Mammary epithelial cell (primary cell): ENCODE measurements at regions of chr4 and their contacts with region 1.

Region 1: DNA sequence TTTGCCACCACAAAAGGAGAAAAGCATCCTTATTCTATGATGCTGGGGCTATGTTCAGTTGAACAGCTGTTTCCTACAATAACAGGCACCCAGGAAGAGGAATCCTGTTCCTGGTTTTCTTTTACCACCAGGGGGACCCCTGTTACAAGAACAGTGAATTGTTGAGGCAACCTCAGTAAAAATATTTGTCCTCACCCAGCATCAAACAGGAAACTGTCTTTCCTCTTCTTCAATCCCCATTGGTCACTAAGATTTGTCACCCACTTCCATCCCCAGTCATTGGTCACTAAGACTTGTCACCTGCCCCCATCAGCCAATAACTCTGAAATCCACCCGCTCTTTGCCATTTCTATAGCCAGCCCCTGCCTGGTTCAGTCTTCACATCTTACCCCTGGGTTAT is 143.5 kb upstream of the GALNT7 start:
- DNase-seq: peak; percentile 58
- H3K4me3 ChIP-seq: no peak overlapping the region
- H3K27ac ChIP-seq: no peak overlapping the region
- H3K4me1 ChIP-seq: no peaks in the 10 kb centered on the region
- H3K27me3 ChIP-seq: no peaks in the 10 kb centered on the region
- CTCF ChIP-seq: peak; percentile 62 to 79

Region 2: DNA sequence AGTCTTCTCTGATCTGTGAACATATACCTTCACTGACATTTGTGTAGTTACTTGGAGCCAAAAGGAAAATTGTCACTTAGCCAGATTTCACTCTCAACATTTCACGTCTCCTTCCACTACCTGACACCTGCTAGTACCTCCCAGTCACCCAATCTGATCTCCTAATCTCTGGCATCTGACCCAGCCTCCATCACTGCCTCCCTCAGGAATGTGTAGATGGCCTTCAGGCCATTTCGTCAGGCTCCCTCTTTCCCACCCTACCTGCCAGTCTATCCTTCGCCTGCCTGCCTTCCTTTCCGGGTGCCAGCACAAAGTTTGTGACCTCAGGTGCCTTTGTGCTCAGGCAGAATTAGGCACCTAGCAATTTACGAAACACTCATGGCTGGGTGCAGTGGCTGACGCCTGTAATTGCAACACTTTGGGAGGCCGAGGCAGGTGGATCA is 184.4 kb after region 1 on chr4:
- CTCF ChIA-PET with region 1: no interaction called
- dilution Hi-C with region 1: no loop called
- in situ Hi-C with region 1: no loop called
- intact Hi-C with region 1: no loop called
- DNase-seq: no peak
- H3K4me3 ChIP-seq: no peak overlapping the region
- H3K27ac ChIP-seq: no peak overlapping the region
- H3K4me1 ChIP-seq: peaks cover 45% of the 10 kb centered on the region
- H3K27me3 ChIP-seq: no peaks in the 10 kb centered on the region
- CTCF ChIP-seq: no peak

Region 3: DNA sequence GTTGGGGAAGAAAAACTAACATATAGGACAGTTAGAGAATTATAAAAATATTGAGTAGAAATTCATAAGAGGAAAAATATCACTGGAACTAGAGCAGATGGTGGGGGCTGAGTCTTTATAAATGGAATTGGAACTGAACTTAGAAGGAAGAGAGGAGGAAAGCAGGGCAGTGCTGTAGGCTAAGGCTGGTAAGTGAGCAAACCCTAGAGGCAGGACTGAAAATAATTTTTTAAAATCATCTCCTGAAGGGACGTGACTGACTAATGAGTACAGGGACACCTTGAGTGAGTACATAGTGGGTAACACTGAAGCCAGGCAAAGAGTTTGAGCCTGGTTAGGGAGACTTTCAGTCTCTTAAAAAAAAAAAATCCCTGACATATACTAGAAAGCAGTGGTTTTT is 206.8 kb after region 1 on chr4:
- CTCF ChIA-PET with region 1: no interaction called
- dilution Hi-C with region 1: no loop called
- in situ Hi-C with region 1: no loop called
- intact Hi-C with region 1: loop called (anchors 1 kb)
- DNase-seq: peak; percentile 32
- H3K4me3 ChIP-seq: no peak overlapping the region
- H3K27ac ChIP-seq: no peak overlapping the region
- H3K4me1 ChIP-seq: no peaks in the 10 kb centered on the region
- H3K27me3 ChIP-seq: no peaks in the 10 kb centered on the region
- CTCF ChIP-seq: peak; percentile 27 to 59

Region 4: DNA sequence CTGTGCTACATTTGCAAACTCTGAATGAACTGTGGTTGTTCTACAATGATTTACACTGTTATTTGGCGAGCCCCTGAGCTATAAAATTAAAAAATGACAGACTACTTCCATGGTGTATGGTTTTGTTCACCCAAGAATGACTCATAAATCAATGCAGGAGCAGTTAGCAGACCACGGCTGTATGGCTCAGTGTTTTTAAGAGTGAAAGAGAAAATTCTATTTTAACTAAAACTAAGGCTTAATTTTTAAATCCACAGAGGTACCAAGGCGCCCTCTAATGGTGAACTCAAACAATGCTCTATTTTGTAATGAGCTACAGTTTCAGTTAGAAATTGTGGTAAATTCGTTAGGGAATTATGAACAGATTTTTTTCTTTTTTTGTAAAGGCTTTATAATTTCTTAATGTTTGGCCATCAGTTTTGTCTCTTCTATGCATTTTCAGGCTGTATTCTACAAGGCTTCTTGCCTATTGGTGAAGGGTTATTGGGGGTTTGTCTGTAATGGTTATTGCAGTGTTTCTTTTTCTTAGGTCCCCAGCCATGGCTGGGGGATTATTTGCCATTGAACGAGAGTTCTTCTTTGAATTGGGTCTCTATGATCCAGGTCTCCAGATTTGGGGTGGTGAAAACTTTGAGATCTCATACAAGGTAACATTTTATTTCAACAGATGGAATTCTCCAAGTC is 276.5 kb after region 1 on chr4:
- CTCF ChIA-PET with region 1: interaction called, 3 read pairs
- dilution Hi-C with region 1: no loop called
- in situ Hi-C with region 1: no loop called
- intact Hi-C with region 1: loop called (anchors 5 kb)
- DNase-seq: no peak
- H3K4me3 ChIP-seq: no peak overlapping the region
- H3K27ac ChIP-seq: no peak overlapping the region
- H3K4me1 ChIP-seq: no peaks in the 10 kb centered on the region
- H3K27me3 ChIP-seq: no peaks in the 10 kb centered on the region
- CTCF ChIP-seq: peak; percentile 62 to 72

Region 5: DNA sequence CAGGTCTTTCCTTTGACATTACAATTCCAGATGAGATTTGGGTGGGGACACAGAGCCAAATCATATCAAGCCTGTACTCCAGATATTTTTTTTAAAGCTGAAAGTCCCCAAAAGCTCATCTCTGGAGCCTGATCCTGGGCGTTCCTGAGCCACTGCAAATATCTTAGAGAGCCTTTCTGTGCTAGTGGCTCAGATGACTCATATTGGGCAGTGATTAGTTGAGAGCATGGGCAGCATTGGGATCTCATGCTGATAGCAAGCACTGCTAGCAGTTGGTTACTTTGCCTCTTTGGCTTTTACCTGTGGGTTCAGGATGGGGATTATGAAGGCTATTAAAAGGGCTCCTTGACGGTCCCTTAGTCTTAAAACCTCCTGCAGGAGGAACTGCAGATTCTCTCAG is 425.1 kb after region 1 on chr4:
- CTCF ChIA-PET with region 1: no interaction called
- dilution Hi-C with region 1: no loop called
- in situ Hi-C with region 1: no loop called
- intact Hi-C with region 1: no loop called
- DNase-seq: no peak
- H3K4me3 ChIP-seq: no peak overlapping the region
- H3K27ac ChIP-seq: no peak overlapping the region
- H3K4me1 ChIP-seq: no peaks in the 10 kb centered on the region
- H3K27me3 ChIP-seq: no peaks in the 10 kb centered on the region
- CTCF ChIP-seq: no peak